IMR-90 (cell line): ENCODE measurements at regions of chr18 and their contacts with region 1.

Region 1: DNA sequence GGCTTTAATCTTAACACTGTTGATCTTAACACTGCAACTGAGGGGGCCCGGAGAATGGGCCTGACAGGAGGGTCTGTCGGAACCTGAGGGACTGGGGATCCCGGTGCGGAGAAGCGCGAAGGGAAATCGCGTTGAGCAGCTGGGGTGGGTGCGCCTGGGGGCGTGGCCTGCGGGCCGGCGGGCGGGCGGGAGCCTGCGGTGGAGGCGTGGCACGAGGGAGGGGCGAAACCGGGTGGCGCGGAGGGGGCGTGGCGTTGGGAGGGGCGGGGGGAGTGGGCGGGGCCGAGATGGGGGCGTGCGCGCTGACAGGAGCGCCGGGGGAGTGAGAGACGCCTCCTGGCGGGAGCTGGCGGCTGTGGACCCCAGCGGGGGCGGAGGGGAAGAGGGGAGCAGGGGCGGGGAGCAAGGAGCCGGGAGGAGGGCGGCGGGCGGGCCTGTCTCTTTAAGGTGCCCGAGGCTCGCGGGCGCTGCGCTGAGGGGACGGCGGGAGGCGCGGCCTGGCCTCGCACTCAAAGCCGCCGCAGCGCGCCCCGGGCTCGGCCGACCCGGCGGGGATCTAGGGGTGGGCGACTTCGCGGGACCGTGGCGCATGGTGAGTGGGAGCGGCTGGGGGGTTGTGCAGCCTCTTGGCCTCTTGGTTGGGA is at the start of gene TWSG1:
- DNase-seq: peak; percentile 93
- ATAC-seq: peak; percentile 89
- H3K4me3 ChIP-seq: peak within 1 kb of the TSS; percentile 89
- H3K27ac ChIP-seq: peak within 1 kb of the TSS; percentile 91
- H3K4me1 ChIP-seq: peaks cover 6% of the 10 kb centered on the region
- H3K27me3 ChIP-seq: no peaks in the 10 kb centered on the region
- CTCF ChIP-seq: peak; percentile 47
- POLR2A ChIP-seq: no peak; the same call in 1 of the 2 replicates
- RAD21 ChIP-seq: no peak
- total RNA-seq, gene TWSG1: 115 and 151 TPM in 2 replicates

Region 2: GRCh38 chr18:9066817-9067306 is 267.6 kb before region 1 on chr18:
- CTCF ChIA-PET with region 1: no interaction called
- POLR2A ChIA-PET with region 1: no interaction called
- dilution Hi-C with region 1: no loop called
- in situ Hi-C with region 1: loop called (anchors 10 kb)
- intact Hi-C with region 1: loop called (anchors 2 kb)
- DNase-seq: no peak
- ATAC-seq: no peak
- H3K4me3 ChIP-seq: no peak overlapping the region
- H3K27ac ChIP-seq: no peak overlapping the region
- H3K4me1 ChIP-seq: peaks cover 2% of the 10 kb centered on the region; the same call in 1 of the 2 replicates
- H3K27me3 ChIP-seq: no peaks in the 10 kb centered on the region
- CTCF ChIP-seq: no peak
- POLR2A ChIP-seq: no peak
- RAD21 ChIP-seq: no peak

Region 3: GRCh38 chr18:9079818-9080528 is 254.5 kb before region 1 on chr18:
- CTCF ChIA-PET with region 1: no interaction called
- POLR2A ChIA-PET with region 1: no interaction called
- dilution Hi-C with region 1: no loop called
- in situ Hi-C with region 1: loop called (anchors 10 kb)
- intact Hi-C with region 1: no loop called
- DNase-seq: no peak
- ATAC-seq: peak; percentile 21; the same call in 1 of the 2 replicates
- H3K4me3 ChIP-seq: no peak overlapping the region
- H3K27ac ChIP-seq: no peak overlapping the region
- H3K4me1 ChIP-seq: peaks cover 2% of the 10 kb centered on the region; the same call in 1 of the 2 replicates
- H3K27me3 ChIP-seq: no peaks in the 10 kb centered on the region
- CTCF ChIP-seq: no peak
- POLR2A ChIP-seq: no peak
- RAD21 ChIP-seq: no peak

Region 4: GRCh38 chr18:9136315-9137155 is 197.9 kb before region 1 on chr18 and contains the start of gene ANKRD12:
- CTCF ChIA-PET with region 1: no interaction called
- POLR2A ChIA-PET with region 1: no interaction called
- dilution Hi-C with region 1: no loop called
- in situ Hi-C with region 1: no loop called
- intact Hi-C with region 1: loop called (anchors 5 kb)
- DNase-seq: peak; percentile 96
- ATAC-seq: peak; percentile 88
- H3K4me3 ChIP-seq: peak within 1 kb of the TSS; percentile 95
- H3K27ac ChIP-seq: peak within 1 kb of the TSS; percentile 97
- H3K4me1 ChIP-seq: peaks cover 8% of the 10 kb centered on the region
- H3K27me3 ChIP-seq: no peaks in the 10 kb centered on the region
- CTCF ChIP-seq: no peak
- POLR2A ChIP-seq: peak; percentile 93
- RAD21 ChIP-seq: peak; percentile 10; the same call in 1 of the 2 replicates
- total RNA-seq, gene ANKRD12: 12.9 and 31.7 TPM in 2 replicates

Region 5: DNA sequence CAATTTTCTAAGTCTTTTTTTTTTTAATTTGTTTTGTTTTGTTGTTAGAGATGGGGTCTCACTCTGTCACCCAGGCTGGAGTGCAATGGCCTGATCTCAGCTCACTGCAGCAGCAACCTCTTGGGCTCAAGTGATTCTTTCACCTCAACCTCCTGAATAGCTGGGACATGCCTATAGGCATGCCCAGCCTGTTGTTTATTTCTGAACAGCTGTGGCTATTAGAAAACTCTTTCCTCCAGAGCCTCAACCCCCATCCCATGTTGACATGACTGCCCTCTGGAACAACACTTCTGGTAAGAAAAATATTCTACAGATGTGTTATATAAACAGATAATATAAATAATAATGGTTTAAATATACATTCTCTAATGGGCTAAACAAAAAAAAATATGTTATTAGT is 44.3 kb before region 1 on chr18:
- CTCF ChIA-PET with region 1: no interaction called
- POLR2A ChIA-PET with region 1: interaction called, 3 read pairs
- dilution Hi-C with region 1: no loop called
- in situ Hi-C with region 1: no loop called
- intact Hi-C with region 1: loop called (anchors 5 kb)
- DNase-seq: peak; percentile 75
- ATAC-seq: peak; percentile 98
- H3K4me3 ChIP-seq: no peak overlapping the region
- H3K27ac ChIP-seq: peak overlapping the region; percentile 93; the same call in 1 of the 2 replicates
- H3K4me1 ChIP-seq: peaks cover 8% of the 10 kb centered on the region
- H3K27me3 ChIP-seq: no peaks in the 10 kb centered on the region
- CTCF ChIP-seq: no peak
- POLR2A ChIP-seq: no peak
- RAD21 ChIP-seq: no peak

Region 6: DNA sequence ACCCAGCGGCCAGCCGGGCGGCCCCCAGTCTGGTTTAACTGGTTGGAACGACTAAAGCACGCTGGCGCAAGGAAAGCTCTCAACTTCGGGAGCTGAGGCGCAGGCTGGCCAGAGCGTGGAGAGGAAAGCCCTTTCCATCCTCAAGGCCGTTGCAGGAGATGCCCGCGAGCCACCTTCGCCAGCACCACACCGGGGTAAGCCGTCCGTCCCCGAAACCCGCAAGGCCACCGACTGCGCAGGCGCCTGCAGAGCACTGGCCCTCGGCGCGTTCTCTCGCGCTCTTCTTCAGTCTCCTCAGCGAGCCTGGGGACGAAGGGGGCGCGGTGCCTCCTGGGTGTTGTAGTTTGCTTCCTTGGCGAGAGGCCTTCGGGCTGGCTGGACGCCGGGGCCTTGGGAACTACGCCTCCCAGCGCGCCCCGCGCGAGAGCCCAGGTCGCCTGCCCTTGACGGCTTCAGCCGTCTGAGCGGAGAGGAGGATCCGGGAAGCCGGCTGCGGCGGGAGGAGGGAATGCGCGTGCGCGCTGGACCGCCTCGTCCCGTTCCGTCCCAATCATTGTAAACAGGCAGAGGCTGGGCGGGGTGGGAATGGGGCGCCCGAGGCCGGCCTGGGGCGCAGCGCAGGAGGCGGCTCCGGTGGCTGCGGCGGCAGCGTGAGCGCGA is 140.7 kb after region 1 on chr18 and contains the start of gene RALBP1:
- CTCF ChIA-PET with region 1: no interaction called
- POLR2A ChIA-PET with region 1: no interaction called
- dilution Hi-C with region 1: no loop called
- in situ Hi-C with region 1: no loop called
- intact Hi-C with region 1: loop called (anchors 1 kb)
- DNase-seq: peak; percentile 99
- ATAC-seq: peak; percentile 95
- H3K4me3 ChIP-seq: peak within 1 kb of the TSS; percentile 70
- H3K27ac ChIP-seq: peak within 1 kb of the TSS; percentile 90
- H3K4me1 ChIP-seq: peaks cover 4% of the 10 kb centered on the region; the same call in 1 of the 2 replicates
- H3K27me3 ChIP-seq: no peaks in the 10 kb centered on the region
- CTCF ChIP-seq: 0 out of 2 replicates have a peak, but pooled peaks have one; percentile 23
- POLR2A ChIP-seq: no peak
- RAD21 ChIP-seq: no peak
- total RNA-seq, gene RALBP1: 38.2 and 58.9 TPM in 2 replicates

Region 7: DNA sequence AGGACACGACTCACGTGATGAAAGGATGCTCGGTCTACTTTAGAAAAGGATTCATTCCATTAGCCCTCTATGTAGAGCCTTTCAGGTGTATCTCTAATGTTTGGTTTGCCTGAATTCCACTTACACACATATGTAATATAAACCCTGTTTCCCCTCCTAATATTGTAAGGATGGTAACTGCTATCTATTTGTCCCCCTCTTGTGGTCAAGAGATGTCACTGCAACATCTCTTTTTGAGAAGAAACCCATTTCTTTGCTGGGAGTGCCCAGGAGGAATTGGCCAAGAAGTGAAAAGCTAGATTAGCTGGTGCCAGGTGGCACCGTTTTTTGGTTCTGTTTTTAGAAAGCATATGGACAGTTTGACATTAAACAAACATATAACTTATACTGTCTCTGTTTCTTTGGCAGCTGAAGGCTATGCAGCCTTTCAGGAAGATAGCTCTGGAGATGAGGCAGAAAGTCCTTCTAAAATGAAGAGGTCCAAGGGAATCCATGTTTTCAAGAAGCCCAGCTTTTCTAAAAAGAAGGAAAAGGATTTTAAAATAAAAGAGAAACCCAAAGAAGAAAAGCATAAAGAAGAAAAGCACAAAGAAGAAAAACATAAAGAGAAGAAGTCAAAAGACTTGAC is 182.1 kb after region 1 on chr18:
- CTCF ChIA-PET with region 1: interaction called, 6 read pairs
- POLR2A ChIA-PET with region 1: no interaction called
- dilution Hi-C with region 1: no loop called
- in situ Hi-C with region 1: no loop called
- intact Hi-C with region 1: loop called (anchors 1 kb)
- DNase-seq: peak; percentile 46
- ATAC-seq: 0 out of 2 replicates have a peak, but pooled peaks have one; percentile 8
- H3K4me3 ChIP-seq: no peak overlapping the region
- H3K27ac ChIP-seq: no peak overlapping the region
- H3K4me1 ChIP-seq: peaks cover 16% of the 10 kb centered on the region
- H3K27me3 ChIP-seq: no peaks in the 10 kb centered on the region
- CTCF ChIP-seq: peak; percentile 76
- POLR2A ChIP-seq: no peak
- RAD21 ChIP-seq: peak; percentile 82

Region 8: GRCh38 chr18:9849407-9850281 is 515.2 kb after region 1 on chr18:
- CTCF ChIA-PET with region 1: no interaction called
- POLR2A ChIA-PET with region 1: no interaction called
- dilution Hi-C with region 1: no loop called
- in situ Hi-C with region 1: no loop called
- intact Hi-C with region 1: no loop called
- DNase-seq: no peak
- ATAC-seq: no peak
- H3K4me3 ChIP-seq: no peak overlapping the region
- H3K27ac ChIP-seq: no peak overlapping the region
- H3K4me1 ChIP-seq: peaks cover 4% of the 10 kb centered on the region
- H3K27me3 ChIP-seq: no peaks in the 10 kb centered on the region
- CTCF ChIP-seq: no peak
- POLR2A ChIP-seq: no peak
- RAD21 ChIP-seq: no peak